Esophagus muscularis mucosa (tissue), 4 donors: ENCODE measurements at regions of chr17 and their contacts with region 1.

Region 1: DNA sequence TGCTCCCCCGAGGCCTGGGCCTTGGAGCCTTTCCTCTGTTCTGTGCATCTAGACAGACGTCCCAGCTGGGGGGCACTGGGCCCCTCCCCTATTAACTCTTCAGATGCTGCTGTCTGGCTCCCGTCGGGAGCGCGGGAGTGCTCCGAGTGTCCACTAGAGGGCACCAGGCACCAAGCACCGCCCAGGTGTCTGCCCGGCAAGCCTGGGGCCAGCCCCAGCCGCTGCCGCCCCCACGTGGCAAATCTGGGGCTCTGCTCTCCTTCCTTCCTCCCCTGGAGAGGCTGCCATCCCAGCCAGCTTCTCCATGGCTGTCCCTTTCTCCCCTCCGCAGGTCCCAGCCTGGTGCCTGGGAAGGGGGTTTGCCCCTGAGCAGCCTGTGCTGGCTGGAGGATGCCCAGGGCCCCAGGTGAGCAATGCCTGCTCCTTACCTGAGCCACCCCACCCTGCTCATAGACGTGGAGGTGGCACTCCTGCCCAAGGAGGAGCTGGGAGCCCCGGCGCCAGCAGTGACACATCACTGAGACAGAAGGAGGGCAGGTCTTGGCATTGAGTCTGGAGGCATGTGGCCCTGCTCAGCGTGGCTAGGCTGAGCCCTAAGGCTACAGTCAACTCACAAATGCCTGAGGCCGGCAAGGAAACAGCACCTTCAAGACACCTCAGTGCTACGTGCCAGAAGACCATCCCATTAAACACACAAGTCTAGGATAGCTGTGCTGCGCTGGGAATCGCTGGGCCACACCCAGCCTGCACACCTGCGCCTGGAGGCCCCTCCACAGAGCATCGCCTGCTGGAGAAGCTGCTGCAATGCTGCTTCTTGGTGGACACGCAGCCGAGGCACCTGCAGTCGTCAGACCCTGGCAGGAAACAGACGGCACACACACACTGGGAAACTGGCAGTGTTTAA is 19.7 kb downstream of the TMEM235 start:
- DNase-seq: no peak
- H3K4me3 ChIP-seq: no peak overlapping the region
- H3K27ac ChIP-seq: no peak overlapping the region
- H3K4me1 ChIP-seq: peaks cover 13 to 38% (median 31%) of the 10 kb centered on the region in 4 donors
- H3K27me3 ChIP-seq: peaks cover 0 to 13% (median 0%) of the 10 kb centered on the region in 4 donors
- CTCF ChIP-seq: peak in 2 of 3 experiments; percentile 100
- EP300 ChIP-seq: no peak
- POLR2A ChIP-seq: no peak

Region 2: GRCh38 chr17:78019367-78019975 is 231.7 kb before region 1 on chr17:
- intact Hi-C with region 1: loop called (anchors 5 kb)
- DNase-seq: no peak
- H3K4me3 ChIP-seq: no peak overlapping the region
- H3K27ac ChIP-seq: no peak overlapping the region
- H3K4me1 ChIP-seq: peaks cover 20 to 48% (median 35%) of the 10 kb centered on the region in 4 donors
- H3K27me3 ChIP-seq: no peaks in the 10 kb centered on the region
- CTCF ChIP-seq: peak; percentile 65 to 73 (median 69)
- EP300 ChIP-seq: no peak
- POLR2A ChIP-seq: no peak

Region 3: GRCh38 chr17:78089576-78090281 is 161.4 kb before region 1 on chr17:
- intact Hi-C with region 1: no loop called
- DNase-seq: no peak
- H3K4me3 ChIP-seq: no peak overlapping the region
- H3K27ac ChIP-seq: peak overlapping the region; percentile 14 to 41 (median 40)
- H3K4me1 ChIP-seq: peaks cover 0 to 17% (median 8%) of the 10 kb centered on the region in 4 donors
- H3K27me3 ChIP-seq: no peaks in the 10 kb centered on the region
- CTCF ChIP-seq: no peak
- EP300 ChIP-seq: no peak
- POLR2A ChIP-seq: no peak

Region 4: GRCh38 chr17:78112518-78113226 is 138.5 kb before region 1 on chr17:
- intact Hi-C with region 1: loop called (anchors 2 kb)
- DNase-seq: no peak
- H3K4me3 ChIP-seq: no peak overlapping the region
- H3K27ac ChIP-seq: no peak overlapping the region
- H3K4me1 ChIP-seq: peaks cover 22 to 55% (median 29%) of the 10 kb centered on the region in 4 donors
- H3K27me3 ChIP-seq: no peaks in the 10 kb centered on the region
- CTCF ChIP-seq: peak; percentile 98 to 100 (median 99)
- EP300 ChIP-seq: no peak
- POLR2A ChIP-seq: no peak

Region 5: GRCh38 chr17:78168242-78168902 is 82.8 kb before region 1 on chr17 and contains the start of gene SYNGR2:
- intact Hi-C with region 1: loop called (anchors 5 kb)
- DNase-seq: no peak
- H3K4me3 ChIP-seq: peak within 1 kb of the TSS; percentile 75 to 99 (median 86)
- H3K27ac ChIP-seq: peak within 1 kb of the TSS; percentile 91 to 98 (median 95)
- H3K4me1 ChIP-seq: peaks cover 43 to 52% (median 51%) of the 10 kb centered on the region in 4 donors
- H3K27me3 ChIP-seq: no peaks in the 10 kb centered on the region
- CTCF ChIP-seq: peak in 1 of 3 experiments; percentile 14
- EP300 ChIP-seq: no peak
- POLR2A ChIP-seq: peak; percentile 83
- total RNA-seq, gene SYNGR2: 63.1 to 164 (median 124) TPM